ENCODE measurements at regions of chr4 and their contacts with region 1.

Region 1: DNA sequence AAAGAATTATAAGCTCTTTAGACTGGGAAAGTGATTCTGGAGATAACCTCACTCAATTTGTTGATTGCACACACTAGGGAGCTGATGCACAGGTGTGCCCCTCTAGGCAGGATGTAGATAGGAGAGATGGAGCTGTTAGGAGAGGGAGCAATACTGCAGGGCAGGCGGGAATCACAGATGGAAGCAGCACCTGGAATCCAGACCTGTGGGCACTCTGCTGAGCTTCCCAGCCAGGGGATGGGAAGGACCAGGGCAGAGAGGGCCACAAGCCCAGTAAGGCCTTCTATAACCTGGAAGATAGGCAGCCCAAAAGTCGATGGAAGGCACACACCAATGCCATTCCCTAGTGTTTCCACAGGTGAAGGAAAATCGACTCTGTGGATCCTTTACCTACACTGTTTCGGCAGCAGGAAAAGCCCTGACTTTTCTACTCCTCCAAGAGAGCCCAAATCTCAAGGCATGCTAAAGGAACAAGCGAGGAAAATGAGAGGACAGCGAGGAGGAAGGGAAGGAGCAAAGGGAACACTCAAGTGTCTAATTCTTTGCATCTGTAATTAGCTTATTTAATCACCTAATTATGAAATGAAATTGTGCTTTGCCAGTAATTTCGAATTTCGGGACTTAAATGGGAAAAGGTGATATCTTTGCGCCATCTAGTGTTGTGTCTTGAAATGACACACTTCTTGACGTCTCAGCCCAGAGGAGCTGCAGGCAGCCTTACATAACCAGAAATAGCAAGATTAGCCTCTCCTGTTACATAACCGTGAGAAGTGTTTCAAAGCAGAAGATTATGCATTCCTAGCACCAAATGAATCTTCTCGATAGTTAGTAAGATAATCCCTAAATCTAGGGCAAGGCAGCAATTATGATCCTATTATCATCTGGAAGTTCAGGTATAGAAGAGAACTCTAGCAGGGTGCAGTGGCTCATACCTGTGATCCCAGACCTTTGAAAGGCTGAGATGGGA is 31.0 kb upstream of the TLR3 start:
- DNase-seq: peak; percentile 37 to 62
- H3K4me3 ChIP-seq: no peak overlapping the region
- H3K27ac ChIP-seq: no peak overlapping the region
- H3K4me1 ChIP-seq: no peaks in the 10 kb centered on the region
- H3K27me3 ChIP-seq: no peaks in the 10 kb centered on the region
- CTCF ChIP-seq: peak; percentile 71 to 87 (median 78)
- POLR2A ChIP-seq: no peak

Region 2: GRCh38 chr4:185542626-185543315 is 495.2 kb before region 1 on chr4:
- intact Hi-C with region 1: no loop called
- DNase-seq: peak; percentile 89 to 92
- H3K4me3 ChIP-seq: no peak overlapping the region
- H3K27ac ChIP-seq: peak overlapping the region; percentile 81 to 85
- H3K4me1 ChIP-seq: peaks cover 0 to 9% of the 10 kb centered on the region in 2 donors
- H3K27me3 ChIP-seq: no peaks in the 10 kb centered on the region
- CTCF ChIP-seq: no peak
- POLR2A ChIP-seq: no peak

Region 3: GRCh38 chr4:185640811-185641675 is 396.9 kb before region 1 on chr4:
- intact Hi-C with region 1: loop called (anchors 5 kb)
- DNase-seq: no peak
- H3K4me3 ChIP-seq: no peak overlapping the region
- H3K27ac ChIP-seq: no peak overlapping the region
- H3K4me1 ChIP-seq: no peaks in the 10 kb centered on the region
- H3K27me3 ChIP-seq: peaks cover 0 to 8% of the 10 kb centered on the region in 2 donors
- CTCF ChIP-seq: peak; percentile 32 to 53 (median 48)
- POLR2A ChIP-seq: no peak